ENCODE measurements at regions of chr11 and their contacts with region 1.

Region 1: DNA sequence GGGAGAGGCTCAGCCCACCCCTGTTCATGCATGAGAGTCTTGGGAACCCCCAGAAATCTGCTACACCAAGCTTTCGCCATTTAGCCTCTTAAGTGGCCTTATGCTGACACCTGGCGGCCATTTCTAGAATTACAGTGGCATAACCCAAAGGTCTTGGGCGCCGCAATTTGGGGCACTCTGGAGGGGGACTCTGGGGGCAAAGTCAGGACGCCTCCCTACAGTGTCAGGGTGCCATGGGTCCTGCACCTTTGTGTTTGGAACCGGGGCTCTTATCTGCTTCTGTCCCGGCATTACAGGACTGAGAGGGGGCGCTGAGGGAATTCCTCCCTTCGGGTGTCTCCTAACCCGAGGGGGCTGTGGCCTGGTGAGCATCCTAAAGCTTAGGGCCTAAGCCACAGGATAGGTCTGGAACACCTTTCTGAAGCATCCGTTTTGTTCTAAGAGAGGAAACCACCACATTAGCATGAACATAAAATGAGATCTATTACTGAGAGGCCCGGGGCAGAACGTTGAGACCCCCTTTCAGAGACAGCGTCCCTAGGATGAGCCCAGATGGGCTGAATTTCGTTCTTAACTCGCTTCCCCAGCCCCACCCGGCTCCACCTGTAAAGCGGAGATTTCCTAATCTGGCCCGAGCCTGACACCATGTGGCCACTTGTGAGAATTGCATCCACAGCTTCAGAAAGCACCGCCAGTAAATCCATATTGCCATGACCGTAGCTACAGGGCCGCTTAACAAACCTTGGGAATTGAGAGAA is 9.3 kb downstream of the INS start:
- DNase-seq: no peak
- ATAC-seq: peak; percentile 53

Region 2: DNA sequence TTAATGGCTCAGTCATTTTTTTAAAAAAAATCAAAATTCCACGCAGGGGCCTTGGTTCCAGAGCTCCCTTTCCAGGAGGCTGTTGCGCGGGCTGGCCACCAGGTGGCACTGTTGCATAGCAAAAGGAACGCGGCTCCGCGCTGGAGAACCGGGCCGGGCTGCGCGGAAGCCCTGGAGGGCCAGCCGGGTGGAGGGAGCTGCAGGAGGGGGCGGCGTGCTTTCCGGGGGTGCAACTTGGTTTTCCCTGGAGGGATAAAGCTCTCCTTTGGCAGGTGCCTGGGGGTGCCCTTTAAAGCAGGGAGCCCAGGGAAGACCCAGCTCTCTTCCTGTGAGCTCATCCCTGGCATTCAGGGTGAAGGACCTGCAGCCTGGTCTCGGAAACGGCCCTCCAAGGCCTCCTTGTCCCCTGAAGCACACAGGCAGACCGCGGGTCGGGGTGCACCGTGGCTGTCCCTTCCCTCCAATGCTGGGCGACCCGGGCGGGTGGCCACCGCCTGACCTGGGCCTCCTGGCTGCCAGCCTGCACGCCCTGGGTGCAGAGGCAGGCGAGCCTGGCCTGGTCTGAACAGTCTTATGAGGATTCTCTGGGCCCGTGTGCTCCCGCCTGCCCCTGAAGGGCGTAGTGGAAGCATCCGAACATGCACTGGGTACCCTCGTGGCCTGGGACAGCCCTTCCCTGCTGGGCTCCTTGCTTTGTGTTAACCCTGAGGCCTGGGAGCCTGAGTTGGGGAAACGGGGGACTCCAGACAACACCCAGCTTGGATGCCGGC is 498.7 kb before region 1 on chr11:
- intact Hi-C with region 1: loop called (anchors 2 kb)
- DNase-seq: peak; percentile 94
- ATAC-seq: peak; percentile 75

Region 3: DNA sequence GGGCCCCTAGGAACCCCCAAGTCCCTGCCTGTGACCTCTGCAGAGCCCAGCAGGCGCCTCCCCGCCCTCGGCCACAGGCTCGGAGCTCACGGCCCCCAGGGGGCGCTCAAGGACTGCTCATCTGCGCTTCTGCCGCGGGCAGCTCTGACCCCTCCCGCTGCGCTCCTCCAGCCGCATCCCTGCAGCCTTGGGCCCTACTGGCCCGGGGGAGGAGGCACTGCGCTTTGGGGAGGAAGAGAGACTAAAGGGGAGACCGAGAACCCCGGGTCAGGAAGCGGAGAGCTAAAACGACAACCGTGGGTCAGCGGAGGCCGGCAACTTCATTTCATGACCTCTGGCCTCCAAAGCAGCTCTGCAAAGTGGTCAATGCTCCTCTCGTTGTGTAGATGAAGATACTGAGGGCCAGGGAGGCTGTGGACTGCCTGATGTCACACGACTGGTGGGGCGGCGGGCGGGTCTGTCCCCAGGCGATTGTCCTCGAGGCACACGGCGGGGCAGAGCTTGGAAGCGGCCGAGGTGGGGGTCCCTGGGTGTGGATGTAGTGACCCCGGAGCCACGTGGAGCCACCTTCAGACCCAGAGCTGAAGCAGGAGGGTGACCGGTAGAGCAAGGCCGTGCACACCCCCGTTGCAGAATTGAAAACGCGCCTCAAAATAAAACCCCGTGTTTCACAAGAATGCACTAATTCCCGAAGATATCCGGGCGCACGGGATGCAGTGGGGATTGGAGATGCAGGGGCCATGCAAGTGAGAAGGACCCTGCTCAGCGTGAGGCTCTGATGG is 457.4 kb before region 1 on chr11:
- intact Hi-C with region 1: loop called (anchors 2 kb)
- DNase-seq: peak; percentile 94
- ATAC-seq: peak; percentile 96

Region 4: DNA sequence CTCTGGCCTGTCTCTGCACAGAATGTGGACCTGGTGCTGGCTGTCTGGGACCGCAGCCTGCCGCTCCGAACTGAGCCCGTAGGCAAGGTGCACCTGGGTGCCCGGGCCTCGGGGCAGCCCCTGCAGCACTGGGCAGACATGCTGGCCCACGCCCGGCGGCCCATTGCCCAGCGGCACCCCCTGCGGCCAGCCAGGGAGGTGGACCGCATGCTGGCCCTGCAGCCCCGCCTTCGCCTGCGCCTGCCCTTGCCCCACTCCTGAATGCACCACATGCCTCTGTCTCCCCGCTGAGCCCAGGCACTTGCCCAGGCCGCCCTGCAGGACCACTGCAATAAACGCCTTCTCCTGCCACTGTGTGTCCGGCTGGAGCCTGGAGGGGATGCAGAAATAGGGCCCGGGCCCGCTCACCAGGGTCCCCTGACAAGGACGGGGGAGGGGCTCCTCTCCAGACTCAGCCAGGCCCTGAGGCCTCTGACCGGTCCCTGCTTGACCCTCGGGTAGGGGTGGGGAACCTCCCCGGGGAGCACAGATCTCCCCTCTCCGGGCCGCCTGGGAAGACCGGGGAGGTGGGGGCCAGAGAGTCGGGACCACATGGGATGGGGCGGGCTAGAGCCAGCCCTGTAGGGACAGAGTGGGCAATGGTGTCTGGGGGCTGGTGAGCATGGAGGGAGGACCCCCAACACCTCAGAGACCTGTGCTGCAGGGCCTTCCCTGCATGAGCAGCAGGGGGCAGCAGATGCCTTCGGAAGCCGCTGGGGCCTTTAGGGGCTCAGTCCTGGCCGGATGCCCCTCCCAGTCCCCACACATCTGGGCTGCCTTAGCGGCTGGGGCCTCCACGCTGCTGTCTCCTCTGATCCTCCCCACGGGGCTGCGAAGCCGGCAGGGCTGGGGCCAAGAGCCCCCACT is 314.3 kb before region 1 on chr11:
- intact Hi-C with region 1: loop called (anchors 1 kb)
- DNase-seq: peak; percentile 81
- ATAC-seq: peak; percentile 60

Region 5: DNA sequence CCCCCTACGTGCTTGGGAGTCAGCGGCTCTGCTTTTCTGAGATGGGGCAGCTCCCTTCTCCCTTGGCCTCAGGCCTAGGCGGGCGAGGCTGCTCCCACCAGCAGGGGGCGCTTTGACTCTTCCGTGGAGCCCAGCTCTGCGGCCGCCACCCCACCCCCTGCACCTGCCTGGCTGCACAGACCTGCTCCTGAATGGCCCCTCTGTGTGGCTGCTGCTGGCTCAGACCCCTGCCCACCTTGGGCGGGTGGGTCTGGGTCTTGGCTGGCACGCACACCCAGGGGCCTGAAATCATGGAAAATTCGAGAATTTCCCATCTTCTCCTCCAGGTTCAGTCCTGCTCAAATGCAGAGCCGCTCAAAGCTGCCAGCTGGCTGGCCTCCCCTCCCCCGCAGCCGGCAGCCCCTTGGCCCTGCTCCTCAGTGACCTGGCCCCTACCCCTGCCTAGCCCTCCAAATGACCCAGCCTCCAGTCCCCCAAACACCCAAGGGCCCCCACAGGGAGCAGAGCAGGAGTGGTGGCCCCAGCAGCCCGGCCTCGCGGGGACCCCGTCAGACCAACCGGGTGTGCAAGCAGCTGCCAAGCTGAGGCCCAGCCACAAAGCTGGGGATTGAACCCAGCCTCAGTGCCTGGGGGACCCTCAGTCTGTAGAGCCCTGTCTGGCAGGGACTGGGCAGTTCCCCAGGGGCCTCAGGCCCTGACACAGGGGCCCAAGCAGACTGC is 269.0 kb before region 1 on chr11:
- intact Hi-C with region 1: loop called (anchors 2 kb)
- DNase-seq: peak; percentile 93
- ATAC-seq: peak; percentile 67

Region 6: GRCh38 chr11:2166091-2166851 is 14.6 kb after region 1 on chr11:
- intact Hi-C with region 1: no loop called
- DNase-seq: peak; percentile 84
- ATAC-seq: peak; percentile 45

Measured in Right ventricle myocardium inferior (tissue), 1 donor.